ENCODE measurements at regions of chr1 and their contacts with region 1.

Region 1: DNA sequence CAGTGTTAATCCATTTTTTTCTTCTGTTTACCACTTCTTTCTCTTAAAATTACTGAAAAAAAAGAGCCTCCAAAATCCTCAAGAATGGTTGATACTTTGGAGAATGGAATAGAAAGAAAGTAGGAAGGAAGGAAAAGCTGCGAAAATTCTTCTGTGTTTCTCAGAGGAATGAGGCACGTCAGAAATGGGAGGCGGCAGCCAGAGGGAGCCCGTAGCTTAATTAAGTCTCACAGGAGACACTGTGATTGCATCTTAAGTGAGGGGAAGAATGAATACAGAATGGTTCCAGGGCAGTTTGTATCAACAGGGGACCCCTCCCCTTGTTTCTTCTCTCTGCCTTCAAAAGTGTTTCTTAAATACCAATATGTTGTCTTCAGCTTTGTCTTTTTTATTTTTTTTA is 1099.5 kb downstream of the PLA2G4A start:
- DNase-seq: peak; percentile 59
- H3K4me3 Mint-ChIP-seq: no peak overlapping the region
- H3K27ac Mint-ChIP-seq: peak overlapping the region; percentile 25
- H3K4me1 Mint-ChIP-seq: no peaks in the 10 kb centered on the region
- H3K27me3 Mint-ChIP-seq: no peaks in the 10 kb centered on the region
- CTCF ChIP-seq: peak; percentile 60

Region 2: DNA sequence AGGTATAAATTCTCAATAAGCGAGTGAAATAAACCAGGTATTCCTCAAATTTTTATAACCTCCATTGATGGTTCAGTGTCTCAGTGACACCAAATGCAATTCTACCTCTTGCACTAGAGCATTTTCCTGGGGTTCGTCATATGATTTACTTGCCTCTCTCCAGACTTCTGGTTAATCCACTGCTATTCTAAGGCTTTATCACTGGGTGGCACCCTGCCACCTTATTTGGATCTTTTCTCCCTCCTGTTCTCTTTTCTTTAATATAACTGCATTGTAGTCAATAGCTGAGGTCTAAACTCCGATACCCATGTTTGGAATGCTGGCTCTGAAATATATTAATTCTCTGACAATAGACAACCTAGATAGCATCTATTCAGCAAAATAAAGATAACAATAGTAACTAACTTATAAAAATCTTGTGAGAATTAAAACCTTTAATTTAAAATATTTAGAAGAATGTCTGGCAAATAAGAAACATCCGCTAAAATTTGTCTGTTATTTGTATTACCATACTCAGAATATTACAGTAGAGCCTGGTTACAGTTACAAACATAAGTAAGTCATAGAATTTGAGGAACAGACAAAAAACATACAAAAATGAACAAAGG is 663.2 kb before region 1 on chr1:
- CTCF ChIA-PET with region 1: interaction called, 7 read pairs
- POLR2A ChIA-PET with region 1: no interaction called
- intact Hi-C with region 1: loop called (anchors 10 kb)
- DNase-seq: peak; percentile 85
- H3K4me3 Mint-ChIP-seq: no peak overlapping the region
- H3K27ac Mint-ChIP-seq: no peak overlapping the region
- H3K4me1 Mint-ChIP-seq: peaks cover 11% of the 10 kb centered on the region
- H3K27me3 Mint-ChIP-seq: no peaks in the 10 kb centered on the region
- CTCF ChIP-seq: peak; percentile 84

Region 3: GRCh38 chr1:187476671-187477070 is 451.6 kb before region 1 on chr1:
- CTCF ChIA-PET with region 1: interaction called, 14 read pairs
- POLR2A ChIA-PET with region 1: no interaction called
- intact Hi-C with region 1: loop called (anchors 10 kb)
- DNase-seq: peak; percentile 44
- H3K4me3 Mint-ChIP-seq: no peak overlapping the region
- H3K27ac Mint-ChIP-seq: no peak overlapping the region
- H3K4me1 Mint-ChIP-seq: peaks cover 6% of the 10 kb centered on the region
- H3K27me3 Mint-ChIP-seq: no peaks in the 10 kb centered on the region
- CTCF ChIP-seq: peak; percentile 42

Region 4: GRCh38 chr1:187961895-187962294 is 33.6 kb after region 1 on chr1:
- CTCF ChIA-PET with region 1: interaction called, 10 read pairs
- POLR2A ChIA-PET with region 1: no interaction called
- intact Hi-C with region 1: no loop called
- DNase-seq: no peak
- H3K4me3 Mint-ChIP-seq: no peak overlapping the region
- H3K27ac Mint-ChIP-seq: no peak overlapping the region
- H3K4me1 Mint-ChIP-seq: no peaks in the 10 kb centered on the region
- H3K27me3 Mint-ChIP-seq: no peaks in the 10 kb centered on the region
- CTCF ChIP-seq: no peak

Region 5: GRCh38 chr1:188240772-188241406 is 312.6 kb after region 1 on chr1:
- CTCF ChIA-PET with region 1: interaction called, 13 read pairs
- POLR2A ChIA-PET with region 1: no interaction called
- intact Hi-C with region 1: no loop called
- DNase-seq: no peak
- H3K4me3 Mint-ChIP-seq: no peak overlapping the region
- H3K27ac Mint-ChIP-seq: no peak overlapping the region
- H3K4me1 Mint-ChIP-seq: peaks cover 20% of the 10 kb centered on the region
- H3K27me3 Mint-ChIP-seq: no peaks in the 10 kb centered on the region
- CTCF ChIP-seq: no peak

Region 6: GRCh38 chr1:188782219-188782841 is 854.0 kb after region 1 on chr1:
- CTCF ChIA-PET with region 1: interaction called, 5 read pairs
- POLR2A ChIA-PET with region 1: interaction called, 4 read pairs
- intact Hi-C with region 1: loop called (anchors 1 kb)
- DNase-seq: peak; percentile 74
- H3K4me3 Mint-ChIP-seq: no peak overlapping the region
- H3K27ac Mint-ChIP-seq: peak overlapping the region; percentile 57
- H3K4me1 Mint-ChIP-seq: no peaks in the 10 kb centered on the region
- H3K27me3 Mint-ChIP-seq: no peaks in the 10 kb centered on the region
- CTCF ChIP-seq: peak; percentile 74